MCF 10A (cell line): ENCODE measurements at regions of chr6 and their contacts with region 1.

Region 1: DNA sequence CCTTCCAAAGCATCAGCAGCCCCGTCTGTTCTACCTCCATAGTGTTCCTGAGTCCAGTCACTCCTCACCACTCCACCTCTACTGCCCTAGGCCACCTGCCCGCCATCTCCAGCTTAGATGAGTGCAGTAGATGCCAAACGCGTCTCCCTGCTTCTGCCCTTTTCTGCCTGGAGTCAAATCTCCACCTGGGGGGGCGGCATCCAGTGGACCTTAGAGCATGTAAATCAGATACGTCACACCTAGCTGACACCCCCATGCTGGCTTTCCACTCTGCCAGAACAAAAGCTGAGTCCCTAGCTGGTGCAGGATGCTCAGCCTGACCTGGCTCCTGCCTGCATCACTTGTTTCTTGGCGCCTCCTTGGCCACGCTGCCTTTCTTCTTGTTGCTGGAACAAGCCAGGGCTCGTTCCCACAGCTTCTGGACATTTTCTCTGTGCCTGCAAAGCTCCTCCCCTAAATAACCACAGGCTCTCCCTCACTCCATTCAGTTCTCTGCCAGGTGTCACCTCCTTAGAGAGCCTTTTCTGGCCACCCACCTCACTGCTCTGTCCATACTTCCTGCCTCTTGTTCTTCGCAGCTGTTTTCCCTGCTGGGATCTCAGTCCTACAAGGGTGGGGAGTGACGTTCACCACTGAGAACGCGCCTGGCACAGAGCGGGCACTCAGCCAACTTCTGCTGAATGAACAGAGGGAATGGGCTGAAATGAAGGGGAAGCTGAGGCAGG is 5.8 kb downstream of the DDR1 start:
- DNase-seq: peak; percentile 83
- H3K4me3 Mint-ChIP-seq: peak overlapping the region; percentile 30
- H3K27ac Mint-ChIP-seq: peak overlapping the region; percentile 17
- H3K4me1 Mint-ChIP-seq: peaks cover 44% of the 10 kb centered on the region
- H3K27me3 Mint-ChIP-seq: no peaks in the 10 kb centered on the region
- CTCF ChIP-seq: no peak

Region 2: DNA sequence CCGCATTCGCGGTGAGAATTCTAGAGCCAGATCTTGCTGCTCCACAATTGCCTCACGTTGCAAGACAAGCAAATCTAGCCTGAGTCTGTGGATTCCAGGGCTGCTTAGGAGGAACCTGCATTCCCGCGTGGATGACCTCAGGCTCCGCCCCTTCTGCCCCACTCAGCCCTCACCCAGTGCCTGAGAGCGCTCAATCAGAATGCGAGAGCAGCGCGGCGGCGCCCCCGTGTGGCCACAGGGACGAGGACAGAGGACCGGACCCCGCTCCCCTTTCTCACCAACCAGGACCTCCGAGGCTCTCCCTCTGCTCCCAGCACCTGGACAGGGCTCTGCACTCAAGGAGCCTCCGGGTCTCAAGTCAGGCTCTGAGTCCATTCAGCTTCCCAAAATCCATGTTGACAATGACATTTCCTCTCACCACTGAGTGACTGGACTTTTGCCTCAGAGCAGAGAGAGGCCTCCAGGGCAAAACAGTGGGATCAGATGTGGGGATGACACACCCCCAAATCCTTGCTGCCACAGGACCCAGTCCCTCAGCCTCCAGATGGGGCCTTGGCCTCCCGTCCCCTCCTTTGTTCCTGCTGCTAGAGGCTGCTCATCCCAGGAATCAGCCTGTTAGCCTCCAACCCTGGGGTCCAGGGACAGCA is 493.1 kb before region 1 on chr6:
- CTCF ChIA-PET with region 1: no interaction called
- POLR2A ChIA-PET with region 1: no interaction called
- intact Hi-C with region 1: no loop called
- DNase-seq: peak; percentile 74
- H3K4me3 Mint-ChIP-seq: no peak overlapping the region
- H3K27ac Mint-ChIP-seq: no peak overlapping the region
- H3K4me1 Mint-ChIP-seq: no peaks in the 10 kb centered on the region
- H3K27me3 Mint-ChIP-seq: peaks cover 34% of the 10 kb centered on the region
- CTCF ChIP-seq: peak; percentile 61

Region 3: GRCh38 chr6:30696432-30696831 is 193.7 kb before region 1 on chr6:
- CTCF ChIA-PET with region 1: no interaction called
- POLR2A ChIA-PET with region 1: no interaction called
- intact Hi-C with region 1: no loop called
- DNase-seq: no peak
- H3K4me3 Mint-ChIP-seq: no peak overlapping the region
- H3K27ac Mint-ChIP-seq: no peak overlapping the region
- H3K4me1 Mint-ChIP-seq: peaks cover 12% of the 10 kb centered on the region
- H3K27me3 Mint-ChIP-seq: no peaks in the 10 kb centered on the region
- CTCF ChIP-seq: no peak

Region 4: GRCh38 chr6:30847421-30847970 is 42.6 kb before region 1 on chr6:
- CTCF ChIA-PET with region 1: no interaction called
- POLR2A ChIA-PET with region 1: no interaction called
- intact Hi-C with region 1: no loop called
- DNase-seq: no peak
- H3K4me3 Mint-ChIP-seq: no peak overlapping the region
- H3K27ac Mint-ChIP-seq: no peak overlapping the region
- H3K4me1 Mint-ChIP-seq: peaks cover 14% of the 10 kb centered on the region
- H3K27me3 Mint-ChIP-seq: no peaks in the 10 kb centered on the region
- CTCF ChIP-seq: no peak

Region 5: DNA sequence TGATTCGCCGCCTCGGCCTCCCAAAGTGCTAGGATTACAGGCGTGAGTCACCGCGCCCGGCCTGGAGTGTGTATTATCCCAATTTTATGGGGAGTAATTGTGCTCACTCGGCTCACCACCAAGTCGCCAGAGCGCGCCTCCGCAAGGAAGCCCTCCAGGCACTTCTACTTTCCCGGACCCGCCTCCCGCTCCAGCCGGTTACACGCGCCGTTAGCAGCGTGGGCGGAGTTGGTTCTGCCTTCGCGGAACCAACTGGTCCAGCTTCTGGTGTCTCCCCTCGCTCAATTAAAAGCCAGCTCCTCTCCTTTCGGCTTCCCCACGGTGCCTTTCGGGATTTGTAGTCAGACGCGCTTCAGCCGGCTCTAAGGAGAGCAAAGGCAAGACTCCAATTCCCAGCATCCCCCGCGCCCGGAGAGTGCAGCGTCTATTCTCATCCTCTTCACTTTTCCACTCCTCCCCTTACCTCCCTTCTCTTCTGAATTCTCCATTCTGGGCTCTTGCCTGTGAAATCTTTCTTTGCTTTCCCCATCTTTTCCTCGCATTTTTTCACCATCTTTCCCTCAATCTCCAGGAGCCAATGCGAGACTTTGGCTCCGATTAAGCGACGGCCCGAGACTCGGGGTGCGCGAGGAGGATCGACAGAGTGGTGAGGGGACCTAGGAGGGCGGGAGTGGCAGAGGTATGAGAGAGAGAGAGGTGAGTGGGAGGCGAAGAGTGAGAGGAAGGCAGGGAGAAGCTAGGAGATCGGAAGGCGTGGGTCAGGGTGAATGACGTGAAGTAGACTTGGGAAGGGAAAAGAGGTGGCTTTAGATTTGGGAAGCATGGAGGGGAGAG is 17.9 kb after region 1 on chr6 and contains the start of gene GTF2H4:
- CTCF ChIA-PET with region 1: interaction called, 19 read pairs
- POLR2A ChIA-PET with region 1: interaction called, 100 read pairs
- intact Hi-C with region 1: loop called (anchors 2 kb)
- DNase-seq: peak; percentile 100
- H3K4me3 Mint-ChIP-seq: peak within 1 kb of the TSS; percentile 96
- H3K27ac Mint-ChIP-seq: peak within 1 kb of the TSS; percentile 57
- H3K4me1 Mint-ChIP-seq: peaks cover 16% of the 10 kb centered on the region
- H3K27me3 Mint-ChIP-seq: no peaks in the 10 kb centered on the region
- CTCF ChIP-seq: no peak
- total RNA-seq, gene GTF2H4: 30.6 and 33.9 TPM in 2 replicates